ENCODE measurements at regions of chr3 and their contacts with region 1.

Region 1: GRCh38 chr3:66407611-66408218 is 93.1 kb downstream of the LRIG1 start:
- DNase-seq: peak; percentile 81
- ATAC-seq: peak; percentile 97
- H3K4me3 Mint-ChIP-seq: no peak overlapping the region
- H3K27ac Mint-ChIP-seq: peak overlapping the region; percentile 34
- H3K4me1 Mint-ChIP-seq: peaks cover 2% of the 10 kb centered on the region
- H3K27me3 Mint-ChIP-seq: no peaks in the 10 kb centered on the region
- CTCF ChIP-seq: peak; percentile 90

Region 2: DNA sequence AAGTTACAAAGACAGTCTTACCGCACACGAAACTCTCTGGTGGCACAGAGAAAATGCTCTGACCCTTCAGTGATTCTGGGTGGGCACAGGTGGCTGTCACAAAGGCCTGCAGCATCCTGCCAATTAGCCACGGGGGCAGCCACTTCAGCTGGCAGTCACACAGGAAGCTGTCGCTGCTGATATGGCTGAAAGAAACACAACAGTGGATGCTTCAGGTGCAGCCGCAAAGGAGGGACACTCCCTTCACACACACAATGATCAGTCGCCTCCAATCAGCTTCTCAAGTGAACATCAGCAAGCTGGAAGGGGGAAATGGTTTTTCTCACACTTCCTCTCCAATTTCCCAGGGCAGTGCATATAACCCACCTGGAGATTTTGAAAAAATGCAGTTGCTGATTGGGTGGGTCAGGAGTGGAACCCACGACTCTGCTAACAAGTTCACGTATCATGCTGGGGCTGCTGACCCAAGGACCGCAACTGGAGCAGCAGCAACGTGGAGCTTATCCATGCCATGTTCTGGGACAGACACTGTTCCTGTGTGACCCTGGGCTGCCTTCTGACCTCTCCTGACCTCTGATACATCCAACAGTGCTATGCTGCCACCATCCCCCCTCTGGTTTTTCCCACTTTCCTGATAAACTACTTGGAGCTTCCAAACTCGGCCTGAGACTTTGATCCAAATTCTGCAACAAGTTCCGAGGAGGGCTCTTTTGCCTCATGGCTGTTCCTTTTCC is 13.5 kb before region 1 on chr3:
- CTCF ChIA-PET with region 1: interaction called, 36 read pairs
- POLR2A ChIA-PET with region 1: interaction called, 6 read pairs
- intact Hi-C with region 1: no loop called
- DNase-seq: peak; percentile 76
- ATAC-seq: peak; percentile 98
- H3K4me3 Mint-ChIP-seq: peak overlapping the region; percentile 59
- H3K27ac Mint-ChIP-seq: peak overlapping the region; percentile 83
- H3K4me1 Mint-ChIP-seq: peaks cover 45% of the 10 kb centered on the region
- H3K27me3 Mint-ChIP-seq: no peaks in the 10 kb centered on the region
- CTCF ChIP-seq: no peak

Region 3: GRCh38 chr3:66500576-66501482 is 93.1 kb after region 1 on chr3 and contains the start of gene LRIG1:
- CTCF ChIA-PET with region 1: interaction called, 4 read pairs
- POLR2A ChIA-PET with region 1: no interaction called
- intact Hi-C with region 1: loop called (anchors 5 kb)
- DNase-seq: peak; percentile 99
- ATAC-seq: peak; percentile 97
- H3K4me3 Mint-ChIP-seq: peak within 1 kb of the TSS; percentile 92
- H3K27ac Mint-ChIP-seq: peak within 1 kb of the TSS; percentile 88
- H3K4me1 Mint-ChIP-seq: peaks cover 43% of the 10 kb centered on the region
- H3K27me3 Mint-ChIP-seq: peaks cover 20% of the 10 kb centered on the region
- CTCF ChIP-seq: no peak
- total RNA-seq, gene LRIG1: 12.7 to 13.0 TPM

Region 4: GRCh38 chr3:66508431-66508830 is 100.7 kb after region 1 on chr3:
- CTCF ChIA-PET with region 1: interaction called, 10 read pairs
- POLR2A ChIA-PET with region 1: no interaction called
- intact Hi-C with region 1: loop called (anchors 5 kb)
- DNase-seq: no peak
- ATAC-seq: no peak
- H3K4me3 Mint-ChIP-seq: no peak overlapping the region
- H3K27ac Mint-ChIP-seq: no peak overlapping the region
- H3K4me1 Mint-ChIP-seq: no peaks in the 10 kb centered on the region
- H3K27me3 Mint-ChIP-seq: peaks cover 8% of the 10 kb centered on the region
- CTCF ChIP-seq: no peak

Region 5: DNA sequence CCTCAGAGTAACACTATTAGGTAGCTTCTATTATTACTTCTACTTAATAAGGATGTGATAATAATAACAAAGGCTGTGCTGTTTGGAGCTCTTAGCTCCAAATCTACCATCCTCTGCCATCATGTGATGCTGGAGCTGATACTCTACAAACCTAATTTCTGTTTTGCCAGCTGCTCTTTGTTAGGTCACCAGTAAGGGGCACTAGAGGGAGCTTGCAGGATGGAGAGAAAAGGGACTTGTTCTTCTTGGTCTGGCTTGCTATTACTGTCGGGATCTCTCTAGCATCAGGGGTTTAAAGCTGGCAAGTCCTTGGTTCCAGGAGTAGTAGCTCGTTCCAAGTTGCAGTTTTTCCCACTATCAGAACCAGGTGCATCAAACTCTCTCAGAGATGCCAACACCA is 395.5 kb after region 1 on chr3:
- CTCF ChIA-PET with region 1: interaction called, 13 read pairs
- POLR2A ChIA-PET with region 1: no interaction called
- intact Hi-C with region 1: no loop called
- DNase-seq: no peak
- ATAC-seq: no peak
- H3K4me3 Mint-ChIP-seq: no peak overlapping the region
- H3K27ac Mint-ChIP-seq: no peak overlapping the region
- H3K4me1 Mint-ChIP-seq: peaks cover 7% of the 10 kb centered on the region
- H3K27me3 Mint-ChIP-seq: peaks cover 13% of the 10 kb centered on the region
- CTCF ChIP-seq: no peak

Region 6: DNA sequence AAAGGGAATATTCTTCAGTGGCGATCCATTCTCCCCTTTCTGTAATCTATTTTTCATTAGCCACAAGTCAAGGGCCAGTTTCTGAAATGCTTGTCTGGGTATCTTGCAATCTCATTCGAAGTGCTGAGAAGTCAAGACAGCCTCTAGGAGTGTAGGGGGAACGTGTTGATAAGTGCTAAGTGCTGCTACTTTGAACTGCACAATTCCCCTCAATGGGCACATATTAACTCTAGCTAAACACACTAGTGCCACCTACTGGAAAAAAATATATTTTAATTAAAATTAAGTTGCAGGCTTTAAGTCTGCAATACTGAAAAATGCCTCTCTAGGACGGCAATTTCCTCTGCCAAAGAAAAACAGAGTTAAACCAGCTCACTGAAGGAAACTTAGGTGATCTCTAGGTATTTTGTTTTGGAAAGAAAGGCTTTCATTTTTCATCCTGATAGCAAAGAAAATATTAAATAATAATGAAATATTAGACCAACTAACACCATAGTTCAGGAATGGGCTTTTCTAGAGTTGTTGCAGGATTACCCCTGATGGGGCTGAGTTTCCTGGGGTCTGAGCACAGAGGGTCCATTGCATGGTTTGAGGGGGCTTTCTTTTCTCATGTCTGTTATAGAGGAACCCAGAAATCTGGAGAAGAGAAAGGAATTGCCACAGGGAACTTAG is 408.5 kb after region 1 on chr3:
- CTCF ChIA-PET with region 1: interaction called, 40 read pairs
- POLR2A ChIA-PET with region 1: no interaction called
- intact Hi-C with region 1: loop called (anchors 2 kb)
- DNase-seq: no peak
- ATAC-seq: peak; percentile 61
- H3K4me3 Mint-ChIP-seq: no peak overlapping the region
- H3K27ac Mint-ChIP-seq: no peak overlapping the region
- H3K4me1 Mint-ChIP-seq: no peaks in the 10 kb centered on the region
- H3K27me3 Mint-ChIP-seq: no peaks in the 10 kb centered on the region
- CTCF ChIP-seq: peak; percentile 79

Region 7: DNA sequence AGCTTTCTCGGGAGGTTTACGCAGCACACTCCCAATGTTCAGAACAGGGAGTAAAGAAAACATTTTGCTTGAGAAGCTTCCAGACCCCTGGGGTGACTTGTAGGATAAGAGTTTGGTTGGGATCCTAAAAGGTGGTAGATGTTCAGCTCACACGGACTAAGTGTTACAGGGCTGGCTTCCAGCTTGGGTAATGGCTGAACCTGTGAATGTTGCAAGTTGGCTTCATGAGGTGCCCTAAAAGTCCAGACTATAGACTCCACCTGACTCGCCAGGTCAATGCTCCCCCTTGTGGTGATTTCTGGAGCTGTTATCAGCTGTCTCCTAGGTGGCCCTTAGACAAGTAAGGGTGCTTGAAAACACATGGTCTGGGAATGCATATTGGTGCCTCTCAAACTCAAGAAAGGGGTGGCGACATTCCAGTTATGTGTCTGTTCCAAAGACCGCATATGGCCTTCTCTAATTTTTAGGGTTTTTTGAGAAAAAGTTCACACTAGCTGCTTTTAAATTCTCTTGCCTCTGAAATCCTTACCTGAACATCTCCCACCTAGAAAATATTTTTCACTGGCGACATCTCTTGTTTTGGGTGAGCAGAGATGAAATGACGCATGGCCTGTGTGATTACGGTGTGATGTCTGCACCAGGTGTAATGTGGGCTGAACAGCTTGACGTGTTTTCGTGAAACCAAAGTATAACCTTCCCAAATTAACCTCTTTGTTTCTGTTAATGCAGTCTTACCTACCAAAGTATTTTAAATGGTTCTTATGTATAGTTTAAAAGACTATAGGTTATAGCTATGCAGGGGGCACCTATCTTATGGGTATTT is 414.7 kb after region 1 on chr3:
- CTCF ChIA-PET with region 1: interaction called, 40 read pairs
- POLR2A ChIA-PET with region 1: no interaction called
- intact Hi-C with region 1: loop called (anchors 2 kb)
- DNase-seq: peak; percentile 73
- ATAC-seq: peak; percentile 77
- H3K4me3 Mint-ChIP-seq: no peak overlapping the region
- H3K27ac Mint-ChIP-seq: no peak overlapping the region
- H3K4me1 Mint-ChIP-seq: no peaks in the 10 kb centered on the region
- H3K27me3 Mint-ChIP-seq: no peaks in the 10 kb centered on the region
- CTCF ChIP-seq: peak; percentile 68

Region 8: DNA sequence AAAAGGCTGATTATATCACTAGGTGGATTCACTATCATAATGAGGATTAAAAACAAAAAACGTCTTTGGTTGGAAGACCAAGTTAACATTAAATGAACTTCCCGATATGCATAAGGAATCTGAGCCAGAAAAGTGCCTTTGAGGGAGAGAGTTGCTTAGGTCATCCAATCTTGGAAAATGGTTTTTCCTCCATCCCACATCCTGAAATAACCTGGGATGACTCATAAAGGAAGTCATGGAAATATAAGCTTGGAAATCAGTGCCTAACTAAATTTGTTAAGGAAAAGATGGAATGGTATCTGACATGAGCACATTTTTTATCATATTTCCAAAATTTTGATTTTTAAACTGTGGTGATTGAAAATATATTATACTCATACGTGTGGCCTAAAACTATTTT is 656.4 kb after region 1 on chr3:
- CTCF ChIA-PET with region 1: no interaction called
- POLR2A ChIA-PET with region 1: no interaction called
- intact Hi-C with region 1: no loop called
- DNase-seq: no peak
- ATAC-seq: no peak
- H3K4me3 Mint-ChIP-seq: no peak overlapping the region
- H3K27ac Mint-ChIP-seq: no peak overlapping the region
- H3K4me1 Mint-ChIP-seq: no peaks in the 10 kb centered on the region
- H3K27me3 Mint-ChIP-seq: peaks cover 5% of the 10 kb centered on the region
- CTCF ChIP-seq: no peak